MCF 10A (cell line): ENCODE measurements at regions of chr1 and their contacts with region 1.

Region 1: GRCh38 chr1:167936068-167936929 is at the start of gene DCAF6:
- DNase-seq: peak; percentile 100
- H3K4me3 Mint-ChIP-seq: peak within 1 kb of the TSS; percentile 81
- H3K27ac Mint-ChIP-seq: peak within 1 kb of the TSS; percentile 85
- H3K4me1 Mint-ChIP-seq: peaks cover 18% of the 10 kb centered on the region
- H3K27me3 Mint-ChIP-seq: no peaks in the 10 kb centered on the region
- CTCF ChIP-seq: no peak
- total RNA-seq, gene DCAF6: 57.2 and 60.8 TPM in 2 replicates

Region 2: DNA sequence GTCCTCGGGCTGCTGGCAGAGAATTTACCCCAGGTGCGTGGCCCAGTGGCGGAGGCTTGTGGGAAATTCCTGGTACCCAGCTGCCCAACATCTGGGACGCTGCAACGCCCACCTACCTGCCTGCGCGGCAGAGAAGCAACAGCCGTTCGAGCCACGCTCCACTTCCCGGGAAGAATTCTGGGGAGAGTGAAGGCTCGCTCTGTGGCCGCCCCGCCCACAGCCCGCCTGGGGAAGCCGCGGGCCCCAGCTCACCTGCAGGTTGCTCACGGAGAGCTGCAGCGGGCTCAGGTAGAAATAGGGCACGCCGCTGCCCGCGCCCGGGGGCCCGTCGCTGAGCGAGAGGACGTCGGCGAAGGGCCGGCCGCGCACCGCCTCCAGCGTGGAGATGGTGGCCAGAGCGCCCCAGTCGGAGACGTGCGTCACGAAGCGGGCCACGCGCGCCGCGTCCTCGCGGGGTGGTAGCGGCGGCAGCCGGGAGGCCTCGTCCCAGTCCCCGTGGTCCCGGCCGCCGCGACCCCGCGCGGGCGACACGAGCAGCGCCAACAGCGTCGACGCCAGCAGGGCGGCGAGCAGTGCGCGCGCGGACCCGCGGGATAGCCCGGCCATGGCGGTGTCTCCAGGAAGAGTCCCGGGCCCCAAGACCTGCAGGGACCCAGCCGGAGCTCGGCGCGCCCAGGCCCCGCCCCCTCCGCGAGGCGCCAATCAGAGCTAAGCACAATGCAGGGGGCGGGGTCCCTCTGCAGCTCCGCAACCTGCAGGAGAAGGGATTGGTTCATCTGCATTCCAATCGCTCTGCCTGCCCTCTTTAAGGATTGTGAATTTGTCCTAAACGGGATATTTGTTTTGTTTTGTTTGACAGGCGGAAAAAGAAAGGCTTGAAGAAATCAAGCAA is 382.9 kb before region 1 on chr1 and contains the start of gene CREG1:
- CTCF ChIA-PET with region 1: interaction called, 4 read pairs
- POLR2A ChIA-PET with region 1: interaction called, 21 read pairs
- intact Hi-C with region 1: no loop called
- DNase-seq: peak; percentile 98
- H3K4me3 Mint-ChIP-seq: peak within 1 kb of the TSS; percentile 87
- H3K27ac Mint-ChIP-seq: peak within 1 kb of the TSS; percentile 36
- H3K4me1 Mint-ChIP-seq: peaks cover 59% of the 10 kb centered on the region
- H3K27me3 Mint-ChIP-seq: no peaks in the 10 kb centered on the region
- CTCF ChIP-seq: no peak
- total RNA-seq, gene CREG1: 136 and 154 TPM in 2 replicates

Region 3: DNA sequence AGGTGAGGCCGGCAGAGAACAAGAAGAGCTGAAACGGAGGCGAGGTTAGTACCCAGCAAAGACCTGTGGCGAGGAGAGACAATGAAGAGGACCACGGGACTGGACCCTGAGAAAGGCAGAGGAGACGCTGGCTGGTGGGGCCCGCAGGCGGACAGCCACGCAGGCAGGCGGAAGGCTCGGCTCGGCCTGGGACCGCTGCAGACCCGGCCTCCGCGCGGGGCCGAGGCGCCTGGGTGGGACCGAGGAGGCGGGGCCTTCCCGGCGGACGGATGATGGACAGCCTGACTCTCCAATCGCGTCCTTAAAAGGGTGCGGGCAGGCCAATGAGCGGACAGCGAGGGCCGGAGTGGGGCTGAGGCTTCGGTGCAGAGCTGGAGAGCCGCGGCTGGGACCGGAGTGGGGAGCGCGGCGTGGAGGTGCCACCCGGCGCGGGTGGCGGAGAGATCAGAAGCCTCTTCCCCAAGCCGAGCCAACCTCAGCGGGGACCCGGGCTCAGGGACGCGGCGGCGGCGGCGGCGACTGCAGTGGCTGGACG is 214.6 kb before region 1 on chr1 and contains the start of gene MPZL1:
- CTCF ChIA-PET with region 1: interaction called, 3 read pairs
- POLR2A ChIA-PET with region 1: interaction called, 93 read pairs
- intact Hi-C with region 1: loop called (anchors 1 kb)
- DNase-seq: peak; percentile 95
- H3K4me3 Mint-ChIP-seq: peak within 1 kb of the TSS; percentile 84
- H3K27ac Mint-ChIP-seq: peak within 1 kb of the TSS; percentile 92
- H3K4me1 Mint-ChIP-seq: peaks cover 52% of the 10 kb centered on the region
- H3K27me3 Mint-ChIP-seq: no peaks in the 10 kb centered on the region
- CTCF ChIP-seq: no peak
- total RNA-seq, gene MPZL1: 164 and 169 TPM in 2 replicates

Region 4: DNA sequence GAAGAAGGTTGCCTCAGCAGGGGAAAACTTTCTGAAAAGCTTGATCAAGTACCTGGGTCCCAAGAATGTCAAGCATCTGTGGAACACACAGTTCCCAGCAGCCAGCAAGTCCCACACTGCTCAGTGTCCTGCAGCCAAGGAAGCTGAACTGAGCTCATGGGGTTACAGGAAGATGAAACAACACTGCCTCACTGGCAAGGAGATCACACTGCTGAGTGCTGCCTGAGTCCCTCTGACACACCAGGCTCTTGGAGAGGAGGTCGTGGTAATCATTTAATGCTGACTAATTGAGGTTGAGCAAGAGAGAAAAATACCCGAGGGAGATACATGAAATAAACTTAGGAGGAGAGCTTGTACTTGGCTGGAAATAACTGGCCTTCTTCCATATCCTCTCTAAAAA is 139.3 kb before region 1 on chr1:
- CTCF ChIA-PET with region 1: interaction called, 3 read pairs
- POLR2A ChIA-PET with region 1: interaction called, 136 read pairs
- intact Hi-C with region 1: loop called (anchors 2 kb)
- DNase-seq: peak; percentile 100
- H3K4me3 Mint-ChIP-seq: peak overlapping the region; percentile 57
- H3K27ac Mint-ChIP-seq: peak overlapping the region; percentile 83
- H3K4me1 Mint-ChIP-seq: peaks cover 63% of the 10 kb centered on the region
- H3K27me3 Mint-ChIP-seq: no peaks in the 10 kb centered on the region
- CTCF ChIP-seq: peak; percentile 12

Region 5: GRCh38 chr1:167922023-167922422 is 14.3 kb before region 1 on chr1:
- CTCF ChIA-PET with region 1: interaction called, 8 read pairs
- POLR2A ChIA-PET with region 1: interaction called, 175 read pairs
- intact Hi-C with region 1: loop called (anchors 1 kb)
- DNase-seq: no peak
- H3K4me3 Mint-ChIP-seq: peak overlapping the region; percentile 9
- H3K27ac Mint-ChIP-seq: peak overlapping the region; percentile 80
- H3K4me1 Mint-ChIP-seq: peaks cover 19% of the 10 kb centered on the region
- H3K27me3 Mint-ChIP-seq: no peaks in the 10 kb centered on the region
- CTCF ChIP-seq: no peak

Region 6: GRCh38 chr1:168112673-168113305 is 176.5 kb after region 1 on chr1:
- CTCF ChIA-PET with region 1: interaction called, 4 read pairs
- POLR2A ChIA-PET with region 1: interaction called, 10 read pairs
- intact Hi-C with region 1: no loop called
- DNase-seq: peak; percentile 100
- H3K4me3 Mint-ChIP-seq: peak overlapping the region; percentile 7
- H3K27ac Mint-ChIP-seq: peak overlapping the region; percentile 32
- H3K4me1 Mint-ChIP-seq: peaks cover 53% of the 10 kb centered on the region
- H3K27me3 Mint-ChIP-seq: no peaks in the 10 kb centered on the region
- CTCF ChIP-seq: no peak

Region 7: GRCh38 chr1:168863772-168864171 is 927.5 kb after region 1 on chr1:
- CTCF ChIA-PET with region 1: no interaction called
- POLR2A ChIA-PET with region 1: no interaction called
- intact Hi-C with region 1: no loop called
- DNase-seq: no peak
- H3K4me3 Mint-ChIP-seq: no peak overlapping the region
- H3K27ac Mint-ChIP-seq: no peak overlapping the region
- H3K4me1 Mint-ChIP-seq: no peaks in the 10 kb centered on the region
- H3K27me3 Mint-ChIP-seq: no peaks in the 10 kb centered on the region
- CTCF ChIP-seq: no peak